Endothelial cell of umbilical vein (primary cell): ENCODE measurements at regions of chr7 and their contacts with region 1.

Region 1: GRCh38 chr7:111735661-111736551 is 173.6 kb upstream of the IMMP2L start:
- DNase-seq: peak; percentile 75
- H3K4me3 ChIP-seq: no peak overlapping the region
- H3K27ac ChIP-seq: peak overlapping the region; percentile 40
- H3K4me1 ChIP-seq: peaks cover 10% of the 10 kb centered on the region
- H3K27me3 ChIP-seq: no peaks in the 10 kb centered on the region
- CTCF ChIP-seq: peak; percentile 64 to 65
- POLR2A ChIP-seq: no peak

Region 2: GRCh38 chr7:111089822-111090426 is 646.0 kb before region 1 on chr7:
- CTCF ChIA-PET with region 1: no interaction called
- POLR2A ChIA-PET with region 1: no interaction called
- dilution Hi-C with region 1: no loop called
- intact Hi-C with region 1: loop called (anchors 5 kb)
- DNase-seq: peak; percentile 54
- H3K4me3 ChIP-seq: no peak overlapping the region
- H3K27ac ChIP-seq: no peak overlapping the region
- H3K4me1 ChIP-seq: peaks cover 3% of the 10 kb centered on the region
- H3K27me3 ChIP-seq: no peaks in the 10 kb centered on the region
- CTCF ChIP-seq: peak; percentile 44 to 52
- POLR2A ChIP-seq: no peak

Region 3: DNA sequence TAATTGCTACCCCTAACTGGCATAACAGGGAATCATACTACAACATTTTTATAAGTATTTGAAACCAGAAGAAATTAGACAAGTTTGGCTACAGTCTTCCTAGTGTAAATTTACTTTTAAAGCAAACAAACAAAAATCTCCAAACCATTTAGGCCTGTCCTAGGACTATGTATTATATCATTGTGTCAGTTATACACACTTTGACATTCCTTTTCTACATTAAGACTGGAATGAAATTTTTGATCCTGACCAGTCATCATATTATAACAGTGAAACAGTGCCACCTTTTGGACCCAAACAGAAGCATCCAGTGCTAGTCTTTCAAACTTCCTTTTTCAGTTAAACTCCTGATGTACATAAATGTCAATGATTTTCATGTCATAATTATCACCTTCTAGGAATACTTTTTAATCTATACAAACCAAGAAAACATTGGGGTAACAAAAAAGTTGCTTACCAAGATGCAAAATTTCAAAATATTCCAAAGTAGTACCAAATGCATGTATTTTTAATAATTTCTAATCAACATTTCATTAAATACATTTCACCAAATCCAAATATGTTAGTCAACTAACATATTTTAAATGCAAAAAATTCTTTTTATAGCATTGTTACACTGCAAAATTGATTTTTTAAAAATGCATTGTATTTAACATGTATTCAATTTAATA is 249.3 kb before region 1 on chr7:
- CTCF ChIA-PET with region 1: no interaction called
- POLR2A ChIA-PET with region 1: no interaction called
- dilution Hi-C with region 1: no loop called
- intact Hi-C with region 1: loop called (anchors 2 kb)
- DNase-seq: peak; percentile 70
- H3K4me3 ChIP-seq: no peak overlapping the region
- H3K27ac ChIP-seq: no peak overlapping the region
- H3K4me1 ChIP-seq: no peaks in the 10 kb centered on the region
- H3K27me3 ChIP-seq: no peaks in the 10 kb centered on the region
- CTCF ChIP-seq: peak; percentile 48 to 57
- POLR2A ChIP-seq: no peak

Region 4: DNA sequence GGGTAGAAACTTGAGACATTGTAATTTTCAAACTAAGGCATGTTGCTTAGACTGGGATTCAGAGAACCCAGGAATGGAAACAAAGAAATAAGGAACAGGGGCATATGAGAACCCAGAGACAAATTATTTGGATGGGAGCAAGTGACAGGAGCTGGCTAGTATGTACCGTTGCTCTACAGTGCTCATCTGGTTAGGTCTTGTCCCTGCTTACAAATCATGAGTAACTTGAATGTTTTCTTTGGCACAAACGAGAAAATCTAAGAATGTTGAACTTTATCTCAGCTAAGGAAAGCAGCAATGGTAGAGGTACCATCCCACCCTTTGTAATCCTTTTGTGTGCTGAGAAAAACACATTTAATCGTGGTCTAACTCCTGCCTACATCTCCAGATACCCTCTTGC is 57.6 kb before region 1 on chr7:
- CTCF ChIA-PET with region 1: no interaction called
- POLR2A ChIA-PET with region 1: no interaction called
- dilution Hi-C with region 1: no loop called
- intact Hi-C with region 1: no loop called
- DNase-seq: no peak
- H3K4me3 ChIP-seq: no peak overlapping the region
- H3K27ac ChIP-seq: no peak overlapping the region
- H3K4me1 ChIP-seq: peaks cover 2% of the 10 kb centered on the region
- H3K27me3 ChIP-seq: peaks cover 0 to 2% of the 10 kb centered on the region in 2 experiments
- CTCF ChIP-seq: no peak
- POLR2A ChIP-seq: no peak

Region 5: GRCh38 chr7:112481833-112482670 is 746.1 kb after region 1 on chr7:
- CTCF ChIA-PET with region 1: no interaction called
- POLR2A ChIA-PET with region 1: no interaction called
- dilution Hi-C with region 1: no loop called
- intact Hi-C with region 1: loop called (anchors 5 kb)
- DNase-seq: peak; percentile 41
- H3K4me3 ChIP-seq: no peak overlapping the region
- H3K27ac ChIP-seq: peak overlapping the region; percentile 28
- H3K4me1 ChIP-seq: peaks cover 33% of the 10 kb centered on the region
- H3K27me3 ChIP-seq: no peaks in the 10 kb centered on the region
- CTCF ChIP-seq: no peak
- POLR2A ChIP-seq: no peak